GM13977 (cell line): ENCODE measurements at regions of chr12 and their contacts with region 1.

Region 1: GRCh38 chr12:45543906-45544315 is 185.6 kb upstream of the ARID2 start:
- DNase-seq: peak; percentile 77
- CTCF ChIP-seq: peak; percentile 67

Region 2: DNA sequence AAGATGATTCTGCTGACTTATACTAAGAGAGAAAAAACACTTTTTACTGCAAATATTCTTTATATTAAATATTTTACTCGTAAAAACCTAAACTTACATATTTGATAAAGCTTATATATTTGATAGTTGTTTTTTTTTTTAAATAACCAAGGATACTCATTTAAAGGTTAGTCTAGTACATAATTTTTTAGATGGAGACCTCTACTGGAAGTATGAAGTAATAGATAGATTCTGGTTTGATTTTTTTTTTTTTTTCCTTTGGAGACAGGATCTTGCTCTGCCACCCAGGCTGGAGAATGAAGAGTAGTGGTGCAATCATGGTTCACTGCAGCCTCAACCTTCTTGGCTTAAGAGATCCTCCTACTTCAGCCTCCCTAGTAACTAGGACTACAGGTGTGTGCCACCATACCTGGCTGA is 202.0 kb after region 1 on chr12:
- in situ Hi-C with region 1: loop called (anchors 10 kb)
- DNase-seq: no peak
- CTCF ChIP-seq: peak; percentile 12